Mammary epithelial cell (primary cell): ENCODE measurements at regions of chr4 and their contacts with region 1.

Region 1: DNA sequence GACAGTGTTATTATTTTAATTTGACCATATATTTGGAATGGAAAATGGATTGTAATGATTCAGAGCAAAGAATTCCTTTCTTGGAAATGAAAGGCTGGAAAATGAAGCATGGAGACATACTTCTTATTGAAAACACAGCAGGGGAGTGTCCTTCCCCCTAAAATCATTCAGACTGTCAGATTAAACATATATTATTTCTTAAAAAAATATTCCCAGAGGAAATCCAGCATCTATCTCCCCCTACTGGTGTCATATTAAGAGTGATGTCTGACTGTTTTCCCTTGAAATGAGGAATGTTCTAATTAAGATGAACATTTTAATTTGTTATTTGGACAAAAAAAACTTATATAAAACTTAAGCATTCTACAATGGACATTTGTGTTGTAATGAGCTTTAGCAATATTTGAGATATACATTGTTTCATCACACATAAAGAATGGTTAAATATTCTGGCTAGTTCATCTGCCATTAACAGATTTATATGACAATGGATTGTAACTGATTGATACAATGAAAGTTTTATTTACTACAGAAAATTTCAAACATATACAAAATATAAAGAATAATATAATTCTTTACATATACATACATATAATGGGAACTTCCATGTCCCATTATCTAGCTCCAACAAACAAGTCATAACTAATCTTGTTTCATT is 264.6 kb downstream of the SPRY1 start:
- DNase-seq: no peak
- H3K4me3 ChIP-seq: no peak overlapping the region
- H3K27ac ChIP-seq: no peak overlapping the region
- H3K4me1 ChIP-seq: no peaks in the 10 kb centered on the region
- H3K27me3 ChIP-seq: no peaks in the 10 kb centered on the region
- CTCF ChIP-seq: peak; percentile 60 to 64

Region 2: GRCh38 chr4:123102897-123103471 is 558.2 kb before region 1 on chr4:
- CTCF ChIA-PET with region 1: no interaction called
- dilution Hi-C with region 1: no loop called
- in situ Hi-C with region 1: no loop called
- intact Hi-C with region 1: loop called (anchors 1 kb)
- DNase-seq: peak; percentile 40
- H3K4me3 ChIP-seq: no peak overlapping the region
- H3K27ac ChIP-seq: no peak overlapping the region
- H3K4me1 ChIP-seq: no peaks in the 10 kb centered on the region
- H3K27me3 ChIP-seq: no peaks in the 10 kb centered on the region
- CTCF ChIP-seq: peak; percentile 60 to 71

Region 3: GRCh38 chr4:123116412-123116811 is 544.8 kb before region 1 on chr4:
- CTCF ChIA-PET with region 1: no interaction called
- dilution Hi-C with region 1: no loop called
- in situ Hi-C with region 1: loop called (anchors 10 kb)
- intact Hi-C with region 1: no loop called
- DNase-seq: peak; percentile 44
- H3K4me3 ChIP-seq: no peak overlapping the region
- H3K27ac ChIP-seq: no peak overlapping the region
- H3K4me1 ChIP-seq: peaks cover 7% of the 10 kb centered on the region
- H3K27me3 ChIP-seq: no peaks in the 10 kb centered on the region
- CTCF ChIP-seq: no peak

Region 4: DNA sequence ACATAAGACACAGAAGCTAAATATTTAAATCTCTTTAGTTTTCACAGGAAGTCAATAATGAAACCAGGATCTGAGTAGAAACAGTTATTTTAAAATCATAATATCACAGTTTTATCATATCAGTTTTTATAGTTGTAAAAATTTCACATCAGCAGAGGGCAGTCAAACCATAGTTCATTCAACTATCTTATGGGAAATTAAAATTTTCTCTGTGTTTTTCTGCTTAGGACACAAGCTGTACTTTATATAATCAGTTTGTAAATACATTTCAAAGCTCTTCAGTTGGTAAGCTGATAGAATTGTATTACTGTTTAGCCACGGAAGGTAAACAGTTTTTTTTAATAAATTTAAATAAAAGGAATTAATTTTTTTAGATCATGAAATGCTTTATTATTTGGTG is 534.0 kb before region 1 on chr4:
- CTCF ChIA-PET with region 1: no interaction called
- dilution Hi-C with region 1: no loop called
- in situ Hi-C with region 1: loop called in 1 of 2 experiments (anchors 10 kb)
- intact Hi-C with region 1: loop called (anchors 1 kb)
- DNase-seq: peak; percentile 9
- H3K4me3 ChIP-seq: no peak overlapping the region
- H3K27ac ChIP-seq: peak overlapping the region; percentile 89
- H3K4me1 ChIP-seq: peaks cover 3% of the 10 kb centered on the region
- H3K27me3 ChIP-seq: no peaks in the 10 kb centered on the region
- CTCF ChIP-seq: peak; percentile 14 to 42

Region 5: GRCh38 chr4:123390846-123391456 is 270.3 kb before region 1 on chr4:
- CTCF ChIA-PET with region 1: no interaction called
- dilution Hi-C with region 1: no loop called
- in situ Hi-C with region 1: loop called in 1 of 2 experiments (anchors 10 kb)
- intact Hi-C with region 1: loop called (anchors 1 kb)
- DNase-seq: no peak
- H3K4me3 ChIP-seq: no peak overlapping the region
- H3K27ac ChIP-seq: no peak overlapping the region
- H3K4me1 ChIP-seq: no peaks in the 10 kb centered on the region
- H3K27me3 ChIP-seq: no peaks in the 10 kb centered on the region
- CTCF ChIP-seq: peak; percentile 48 to 58

Region 6: DNA sequence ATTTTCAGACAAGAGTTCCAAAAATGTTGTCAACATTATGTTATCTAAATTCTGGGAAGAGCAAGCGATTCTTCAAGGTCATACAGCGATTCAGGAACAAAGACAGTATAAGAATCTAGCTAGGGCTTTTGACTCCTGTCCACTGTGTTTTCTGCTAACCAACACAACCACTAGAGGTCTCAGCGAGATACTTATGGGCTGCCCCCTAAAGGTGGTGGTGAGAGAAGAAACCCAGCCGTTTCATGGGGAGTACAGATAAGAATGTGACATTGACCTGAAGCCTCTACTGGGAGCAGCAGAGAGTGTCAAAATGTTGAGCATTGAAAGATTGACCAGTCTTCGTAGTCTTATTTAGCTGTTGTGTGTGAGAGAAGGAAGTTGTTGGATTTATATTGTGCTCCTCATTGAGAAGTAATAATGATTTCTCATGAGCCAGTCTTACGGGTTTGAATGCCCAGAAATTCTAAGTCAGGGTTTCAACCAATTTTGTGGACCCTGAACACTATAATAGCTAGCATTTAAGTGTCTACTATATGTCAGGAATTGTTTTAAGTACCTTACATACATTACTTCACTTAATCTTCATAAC is 96.4 kb before region 1 on chr4:
- CTCF ChIA-PET with region 1: no interaction called
- dilution Hi-C with region 1: no loop called
- in situ Hi-C with region 1: no loop called
- intact Hi-C with region 1: loop called (anchors 2 kb)
- DNase-seq: peak; percentile 72
- H3K4me3 ChIP-seq: no peak overlapping the region
- H3K27ac ChIP-seq: no peak overlapping the region
- H3K4me1 ChIP-seq: peaks cover 5% of the 10 kb centered on the region
- H3K27me3 ChIP-seq: no peaks in the 10 kb centered on the region
- CTCF ChIP-seq: peak; percentile 92 to 99

Region 7: DNA sequence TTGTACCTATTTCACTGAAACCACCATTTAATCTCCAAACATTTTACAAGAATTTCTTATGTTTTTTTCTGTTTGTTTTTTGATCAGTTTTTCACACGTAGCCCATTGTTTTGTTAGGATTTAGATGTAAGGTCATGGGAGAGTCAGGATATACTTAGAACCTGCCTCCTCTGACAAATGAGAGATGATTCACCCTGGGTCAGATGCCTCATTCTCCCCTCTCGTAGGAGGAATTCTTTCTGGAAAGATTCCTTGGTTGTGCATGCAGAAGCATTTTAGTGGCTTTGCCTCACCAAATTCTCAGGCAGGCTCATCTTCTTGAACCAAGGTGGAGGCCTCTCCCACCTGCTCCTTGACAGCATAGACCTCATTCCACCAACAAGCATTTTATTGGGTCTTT is 334.7 kb after region 1 on chr4:
- CTCF ChIA-PET with region 1: no interaction called
- dilution Hi-C with region 1: no loop called
- in situ Hi-C with region 1: no loop called
- intact Hi-C with region 1: loop called (anchors 10 kb)
- DNase-seq: peak; percentile 68
- H3K4me3 ChIP-seq: no peak overlapping the region
- H3K27ac ChIP-seq: no peak overlapping the region
- H3K4me1 ChIP-seq: no peaks in the 10 kb centered on the region
- H3K27me3 ChIP-seq: no peaks in the 10 kb centered on the region
- CTCF ChIP-seq: no peak